ENCODE measurements at regions of chr18 and their contacts with region 1.

Region 1: DNA sequence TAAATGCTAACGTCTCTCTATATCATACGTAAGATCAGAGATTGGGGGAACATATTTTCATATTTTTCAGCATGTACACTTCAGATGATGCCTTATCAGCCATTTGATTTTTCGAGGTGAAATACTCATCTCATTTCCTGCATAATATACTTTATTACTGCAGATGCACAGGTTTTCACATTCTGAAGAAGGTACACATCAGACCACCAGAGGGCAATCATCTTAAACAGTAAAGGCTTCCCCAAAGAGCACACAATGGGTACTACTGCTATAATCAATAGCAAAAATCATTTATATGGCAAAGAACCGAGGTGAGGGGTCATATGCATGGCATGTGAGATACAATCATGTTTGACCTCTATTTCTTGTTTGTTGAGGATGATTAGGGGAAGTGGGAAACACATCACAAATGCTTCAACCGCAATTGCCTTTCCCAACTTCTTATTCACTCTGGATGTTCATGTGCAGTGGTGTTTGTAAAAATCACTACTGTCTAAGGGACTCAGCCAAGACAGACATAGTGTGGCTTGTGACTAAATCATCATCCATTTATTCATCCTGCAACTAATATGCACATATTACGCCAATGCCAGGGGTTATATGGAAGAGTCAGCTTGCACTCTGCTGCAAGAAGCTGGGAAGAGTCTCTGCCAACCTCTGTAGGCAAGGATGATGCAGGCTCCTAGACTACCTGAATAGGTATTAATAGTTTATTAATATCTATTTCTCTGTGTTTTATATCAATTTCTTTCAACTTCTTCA is 118.7 kb downstream of the EPB41L3 start:
- DNase-seq: no peak
- H3K4me3 ChIP-seq: no peak overlapping the region
- H3K27ac ChIP-seq: no peak overlapping the region
- H3K4me1 ChIP-seq: peaks cover 0 to 5% (median 0%) of the 10 kb centered on the region in 4 donors
- H3K27me3 ChIP-seq: no peaks in the 10 kb centered on the region
- CTCF ChIP-seq: peak; percentile 23 to 37 (median 32)
- EP300 ChIP-seq: no peak
- POLR2A ChIP-seq: no peak

Region 2: GRCh38 chr18:5546660-5547059 is 121.6 kb after region 1 on chr18:
- in situ Hi-C with region 1: no loop called
- intact Hi-C with region 1: loop called (anchors 10 kb)
- DNase-seq: no peak
- H3K4me3 ChIP-seq: no peak overlapping the region
- H3K27ac ChIP-seq: no peak overlapping the region
- H3K4me1 ChIP-seq: peaks cover 0 to 14% (median 2%) of the 10 kb centered on the region in 4 donors
- H3K27me3 ChIP-seq: peaks cover 19% of the 10 kb centered on the region
- CTCF ChIP-seq: peak in 4 of 5 experiments; percentile 35 to 60 (median 40)
- EP300 ChIP-seq: no peak
- POLR2A ChIP-seq: no peak

Measured in transverse colon (tissue), 4 donors.